Activated B cell treated with CpG ODN at 0.5 μM for 24 hours (primary cell): ENCODE measurements at regions of chr19 and their contacts with region 1.

Region 1: GRCh38 chr19:40750059-40750873 is at the start of gene ACTMAP:
- DNase-seq: peak; percentile 97
- ATAC-seq: peak; percentile 88
- H3K4me3 Mint-ChIP-seq: peak within 1 kb of the TSS; percentile 97
- H3K27ac Mint-ChIP-seq: peak within 1 kb of the TSS; percentile 96
- H3K4me1 Mint-ChIP-seq: peaks cover 49% of the 10 kb centered on the region
- H3K27me3 Mint-ChIP-seq: no peaks in the 10 kb centered on the region
- CTCF ChIP-seq: no peak
- total RNA-seq, gene ACTMAP: 8.5 and 12.7 TPM in 2 replicates

Region 2: DNA sequence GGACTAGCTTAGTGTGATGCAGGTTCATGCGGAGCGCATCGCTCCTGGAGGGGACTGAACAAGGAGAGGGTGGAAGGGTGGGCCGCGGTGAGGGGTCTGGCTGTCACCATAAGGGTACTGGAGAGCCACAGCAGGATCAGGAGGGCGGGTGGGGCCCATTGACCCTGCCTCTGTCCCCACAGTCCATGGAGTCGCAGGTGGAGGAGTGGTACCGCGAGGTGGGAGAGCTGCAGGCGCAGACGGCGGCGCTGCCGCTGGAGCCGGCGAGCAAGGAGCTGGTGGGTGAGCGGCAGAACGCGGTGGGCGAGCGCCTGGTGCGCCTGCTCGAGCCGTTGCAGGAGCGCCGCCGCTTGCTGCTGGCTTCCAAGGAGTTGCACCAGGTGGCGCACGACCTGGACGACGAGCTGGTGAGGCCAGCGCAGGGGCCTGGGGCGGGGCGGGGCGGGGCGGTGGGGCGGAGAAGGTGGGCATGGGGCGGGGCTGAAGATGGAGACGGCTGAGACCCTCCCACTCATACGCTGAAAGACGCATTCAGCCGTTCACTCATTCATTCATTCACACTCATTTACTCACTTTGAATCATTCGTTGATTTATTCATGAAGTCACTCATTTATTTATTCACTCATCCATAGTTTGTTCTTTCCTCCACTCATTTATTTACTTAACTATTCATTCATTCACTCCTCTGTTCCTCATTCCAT is 201.1 kb before region 1 on chr19:
- CTCF ChIA-PET with region 1: no interaction called
- POLR2A ChIA-PET with region 1: no interaction called
- intact Hi-C with region 1: no loop called
- DNase-seq: peak; percentile 52
- ATAC-seq: peak; percentile 85
- H3K4me3 Mint-ChIP-seq: no peak overlapping the region
- H3K27ac Mint-ChIP-seq: no peak overlapping the region
- H3K4me1 Mint-ChIP-seq: peaks cover 7% of the 10 kb centered on the region
- H3K27me3 Mint-ChIP-seq: peaks cover 38% of the 10 kb centered on the region
- CTCF ChIP-seq: no peak

Region 3: GRCh38 chr19:40690693-40691420 is 59.4 kb before region 1 on chr19:
- CTCF ChIA-PET with region 1: no interaction called
- POLR2A ChIA-PET with region 1: interaction called, 16 read pairs
- intact Hi-C with region 1: loop called (anchors 1 kb)
- DNase-seq: peak; percentile 76
- ATAC-seq: peak; percentile 78
- H3K4me3 Mint-ChIP-seq: peak overlapping the region; percentile 95
- H3K27ac Mint-ChIP-seq: peak overlapping the region; percentile 89
- H3K4me1 Mint-ChIP-seq: peaks cover 16% of the 10 kb centered on the region
- H3K27me3 Mint-ChIP-seq: no peaks in the 10 kb centered on the region
- CTCF ChIP-seq: no peak

Region 4: DNA sequence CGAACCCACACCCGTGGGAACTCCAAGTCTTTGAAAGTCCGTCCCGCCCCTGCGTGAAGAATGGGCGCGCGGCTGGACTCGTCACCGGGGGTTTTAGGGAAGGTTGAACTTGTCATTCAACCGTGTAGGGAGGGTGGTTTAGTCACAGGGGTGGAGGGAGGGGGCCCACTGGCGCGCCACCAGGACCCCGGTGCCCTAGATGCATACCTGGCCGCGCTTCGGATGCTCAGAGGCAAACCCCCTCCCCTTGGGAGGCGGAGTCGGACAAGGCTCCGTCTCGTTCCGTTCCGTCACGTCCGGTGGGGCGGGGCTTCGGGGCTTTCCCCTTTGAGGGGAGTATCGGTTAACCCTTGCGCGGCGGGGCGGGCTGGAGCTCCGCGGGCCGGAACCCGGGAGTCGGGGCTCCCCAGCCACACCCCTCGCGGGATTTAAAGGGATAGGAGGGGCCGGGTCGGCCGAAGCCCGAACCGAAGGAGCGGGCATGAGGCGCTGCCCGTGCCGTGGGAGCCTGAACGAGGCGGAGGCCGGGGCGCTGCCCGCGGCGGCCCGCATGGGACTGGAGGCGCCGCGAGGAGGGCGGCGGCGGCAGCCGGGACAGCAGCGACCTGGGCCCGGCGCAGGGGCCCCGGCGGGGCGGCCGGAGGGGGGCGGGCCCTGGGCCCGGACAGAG is 33.5 kb before region 1 on chr19 and contains the starts of genes COQ8B and ITPKC:
- CTCF ChIA-PET with region 1: no interaction called
- POLR2A ChIA-PET with region 1: interaction called, 36 read pairs
- intact Hi-C with region 1: loop called (anchors 1 kb)
- DNase-seq: peak; percentile 100
- ATAC-seq: peak; percentile 70
- H3K4me3 Mint-ChIP-seq: peak within 1 kb of the TSS; percentile 90
- H3K27ac Mint-ChIP-seq: peak within 1 kb of the TSS; percentile 95
- H3K4me1 Mint-ChIP-seq: peaks cover 63% of the 10 kb centered on the region
- H3K27me3 Mint-ChIP-seq: no peaks in the 10 kb centered on the region
- CTCF ChIP-seq: no peak
- total RNA-seq, gene COQ8B: 34.4 and 38.5 TPM in 2 replicates
- total RNA-seq, gene ITPKC: 13.0 and 13.3 TPM in 2 replicates

Region 5: GRCh38 chr19:40762754-40763470 is 12.6 kb after region 1 on chr19:
- CTCF ChIA-PET with region 1: no interaction called
- POLR2A ChIA-PET with region 1: interaction called, 11 read pairs
- intact Hi-C with region 1: no loop called
- DNase-seq: no peak
- ATAC-seq: no peak
- H3K4me3 Mint-ChIP-seq: no peak overlapping the region
- H3K27ac Mint-ChIP-seq: no peak overlapping the region
- H3K4me1 Mint-ChIP-seq: peaks cover 3% of the 10 kb centered on the region
- H3K27me3 Mint-ChIP-seq: no peaks in the 10 kb centered on the region
- CTCF ChIP-seq: no peak

Region 6: DNA sequence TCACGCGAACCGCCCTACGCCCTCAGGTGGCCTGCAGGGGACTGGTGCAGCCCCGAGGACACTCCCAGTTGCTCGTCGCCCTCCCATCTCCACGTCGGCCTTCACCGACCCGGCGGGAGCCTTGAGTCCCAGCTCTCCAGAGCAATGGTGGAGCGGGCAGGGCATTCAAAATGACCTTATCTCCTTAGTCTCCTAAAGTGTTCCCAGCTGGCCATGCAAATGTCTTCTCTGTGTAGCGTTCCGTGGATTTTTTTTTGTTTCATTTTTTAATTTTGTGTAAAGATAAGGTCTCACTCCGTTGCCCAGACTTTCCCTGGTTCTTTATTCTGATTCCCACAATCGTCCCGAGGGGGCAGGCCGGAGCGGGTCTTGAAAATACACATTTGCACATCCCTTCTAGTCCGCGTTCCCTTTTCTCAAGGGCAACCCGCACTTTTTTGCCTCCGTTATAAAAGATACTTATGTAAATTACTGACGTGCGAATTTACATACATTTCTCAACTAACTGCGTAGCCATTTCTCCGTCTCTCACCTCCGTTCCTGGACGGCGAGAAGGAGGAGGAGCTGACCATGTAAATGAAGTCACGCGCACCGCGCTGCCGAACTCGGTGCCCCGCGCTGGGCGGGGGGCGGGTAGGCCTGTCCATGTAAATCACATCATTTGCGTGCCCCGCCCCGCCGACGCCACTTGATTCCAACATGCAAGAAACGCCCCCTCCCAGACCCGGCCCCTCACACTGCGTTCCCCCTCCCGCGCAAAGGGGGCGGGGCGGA is 48.1 kb after region 1 on chr19:
- CTCF ChIA-PET with region 1: interaction called, 4 read pairs
- POLR2A ChIA-PET with region 1: interaction called, 85 read pairs
- intact Hi-C with region 1: loop called (anchors 1 kb)
- DNase-seq: peak; percentile 57
- ATAC-seq: peak; percentile 38
- H3K4me3 Mint-ChIP-seq: peak overlapping the region; percentile 95
- H3K27ac Mint-ChIP-seq: peak overlapping the region; percentile 99
- H3K4me1 Mint-ChIP-seq: peaks cover 62% of the 10 kb centered on the region
- H3K27me3 Mint-ChIP-seq: no peaks in the 10 kb centered on the region
- CTCF ChIP-seq: no peak

Region 7: DNA sequence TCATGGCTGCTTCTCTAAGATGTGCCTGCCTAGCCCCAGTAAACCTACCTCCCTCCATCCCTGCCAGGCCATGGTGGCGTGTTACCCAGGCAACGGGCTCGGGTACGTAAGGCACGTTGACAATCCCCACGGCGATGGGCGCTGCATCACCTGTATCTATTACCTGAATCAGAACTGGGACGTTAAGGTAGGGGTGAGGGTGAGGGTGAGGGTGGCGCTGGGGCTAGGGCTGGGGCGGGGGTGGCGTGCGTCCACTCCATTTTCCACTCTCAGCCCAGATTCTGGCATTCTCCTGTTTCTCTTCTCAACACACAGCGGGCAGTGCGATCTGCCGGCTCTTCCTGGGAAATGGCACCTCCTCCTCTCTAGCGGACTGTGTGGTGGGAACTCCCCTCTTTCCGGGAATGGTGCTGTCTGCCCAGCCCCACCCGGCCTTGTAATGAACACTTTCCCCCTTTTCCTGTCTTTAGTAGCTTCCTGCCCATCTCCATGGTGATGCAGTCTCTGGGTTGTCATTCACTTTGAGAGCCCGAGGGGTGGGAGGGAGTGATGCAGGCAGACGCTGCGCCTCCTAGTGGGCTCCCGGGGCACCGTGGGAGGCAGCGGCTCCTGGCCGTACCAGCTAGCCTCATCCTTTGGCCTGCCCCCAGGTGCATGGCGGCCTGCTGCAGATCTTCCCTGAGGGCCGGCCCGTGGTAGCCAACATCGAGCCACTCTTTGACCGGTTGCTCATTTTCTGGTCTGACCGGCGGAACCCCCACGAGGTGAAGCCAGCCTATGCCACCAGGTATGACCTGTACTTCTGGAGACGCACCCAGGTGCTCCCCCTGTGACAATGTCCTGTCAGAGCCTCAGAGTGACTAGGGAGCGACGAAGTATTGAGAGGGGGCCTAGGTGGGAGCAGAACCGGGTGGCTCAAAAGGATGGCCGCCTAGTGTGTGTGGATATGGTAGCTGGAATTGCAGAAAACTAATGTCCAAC is 56.5 kb after region 1 on chr19:
- CTCF ChIA-PET with region 1: interaction called, 10 read pairs
- POLR2A ChIA-PET with region 1: interaction called, 85 read pairs
- intact Hi-C with region 1: no loop called
- DNase-seq: peak; percentile 60
- ATAC-seq: peak; percentile 18
- H3K4me3 Mint-ChIP-seq: peak overlapping the region; percentile 69
- H3K27ac Mint-ChIP-seq: peak overlapping the region; percentile 87
- H3K4me1 Mint-ChIP-seq: peaks cover 84% of the 10 kb centered on the region
- H3K27me3 Mint-ChIP-seq: no peaks in the 10 kb centered on the region
- CTCF ChIP-seq: no peak

Region 8: GRCh38 chr19:40813182-40813958 is 63.1 kb after region 1 on chr19:
- CTCF ChIA-PET with region 1: interaction called, 10 read pairs
- POLR2A ChIA-PET with region 1: interaction called, 5 read pairs
- intact Hi-C with region 1: loop called (anchors 2 kb)
- DNase-seq: no peak
- ATAC-seq: no peak
- H3K4me3 Mint-ChIP-seq: no peak overlapping the region
- H3K27ac Mint-ChIP-seq: no peak overlapping the region
- H3K4me1 Mint-ChIP-seq: peaks cover 47% of the 10 kb centered on the region
- H3K27me3 Mint-ChIP-seq: no peaks in the 10 kb centered on the region
- CTCF ChIP-seq: no peak

Region 9: GRCh38 chr19:41076286-41076685 is 326.0 kb after region 1 on chr19:
- CTCF ChIA-PET with region 1: no interaction called
- POLR2A ChIA-PET with region 1: no interaction called
- intact Hi-C with region 1: no loop called
- DNase-seq: no peak
- ATAC-seq: no peak
- H3K4me3 Mint-ChIP-seq: no peak overlapping the region
- H3K27ac Mint-ChIP-seq: no peak overlapping the region
- H3K4me1 Mint-ChIP-seq: no peaks in the 10 kb centered on the region
- H3K27me3 Mint-ChIP-seq: peaks cover 45% of the 10 kb centered on the region
- CTCF ChIP-seq: no peak